H1 (cell line): ENCODE measurements at regions of chr9 and their contacts with region 1.

Region 1: DNA sequence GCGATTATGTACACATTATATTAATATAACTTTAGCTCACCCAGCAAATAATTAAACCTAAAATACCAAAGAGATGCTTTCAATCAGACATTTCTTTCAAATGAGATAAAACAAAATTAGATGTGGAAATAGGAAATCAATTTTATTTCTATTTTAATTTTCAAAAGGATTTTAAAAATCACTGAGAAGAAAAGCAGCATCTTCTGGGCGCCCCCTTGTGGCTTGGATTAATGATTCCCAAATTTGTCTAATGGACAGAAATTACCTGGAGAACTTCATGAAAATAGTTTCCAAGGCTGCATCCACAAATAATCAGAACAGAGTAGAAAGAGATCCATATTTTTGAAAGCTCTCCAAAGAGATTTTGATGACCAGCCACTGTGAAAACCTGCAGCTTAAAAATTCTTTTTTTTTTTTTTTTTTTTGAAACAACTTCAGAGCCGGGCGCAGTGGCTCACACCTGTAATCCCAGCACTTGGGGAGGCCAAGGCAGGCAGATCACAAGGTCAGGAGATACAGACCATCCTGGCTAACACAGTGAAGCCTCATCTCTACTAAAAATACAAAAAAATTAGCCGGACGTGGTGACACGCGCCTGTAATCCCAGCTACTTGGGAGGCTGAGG is 50.9 kb upstream of the CEMIP2 start:
- DNase-seq: no peak
- H3K4me3 ChIP-seq: no peak overlapping the region
- H3K27ac ChIP-seq: no peak overlapping the region
- H3K4me1 ChIP-seq: peaks cover 0 to 8% (median 1%) of the 10 kb centered on the region in 4 experiments; a peak in 3 of 7 replicates
- H3K27me3 ChIP-seq: no peaks in the 10 kb centered on the region
- CTCF ChIP-seq: peak in 2 of 3 experiments; percentile 27 to 46; a peak in 2 of 4 replicates
- EP300 ChIP-seq: no peak
- POLR2A ChIP-seq: no peak
- RAD21 ChIP-seq: peak; percentile 50 to 53

Region 2: GRCh38 chr9:70911791-70912190 is 907.4 kb before region 1 on chr9:
- CTCF ChIA-PET with region 1: no interaction called
- POLR2A ChIA-PET with region 1: no interaction called
- DNase-seq: no peak
- H3K4me3 ChIP-seq: no peak overlapping the region
- H3K27ac ChIP-seq: no peak overlapping the region
- H3K4me1 ChIP-seq: no peaks in the 10 kb centered on the region
- H3K27me3 ChIP-seq: no peaks in the 10 kb centered on the region
- CTCF ChIP-seq: no peak
- EP300 ChIP-seq: no peak
- POLR2A ChIP-seq: no peak
- RAD21 ChIP-seq: no peak

Region 3: DNA sequence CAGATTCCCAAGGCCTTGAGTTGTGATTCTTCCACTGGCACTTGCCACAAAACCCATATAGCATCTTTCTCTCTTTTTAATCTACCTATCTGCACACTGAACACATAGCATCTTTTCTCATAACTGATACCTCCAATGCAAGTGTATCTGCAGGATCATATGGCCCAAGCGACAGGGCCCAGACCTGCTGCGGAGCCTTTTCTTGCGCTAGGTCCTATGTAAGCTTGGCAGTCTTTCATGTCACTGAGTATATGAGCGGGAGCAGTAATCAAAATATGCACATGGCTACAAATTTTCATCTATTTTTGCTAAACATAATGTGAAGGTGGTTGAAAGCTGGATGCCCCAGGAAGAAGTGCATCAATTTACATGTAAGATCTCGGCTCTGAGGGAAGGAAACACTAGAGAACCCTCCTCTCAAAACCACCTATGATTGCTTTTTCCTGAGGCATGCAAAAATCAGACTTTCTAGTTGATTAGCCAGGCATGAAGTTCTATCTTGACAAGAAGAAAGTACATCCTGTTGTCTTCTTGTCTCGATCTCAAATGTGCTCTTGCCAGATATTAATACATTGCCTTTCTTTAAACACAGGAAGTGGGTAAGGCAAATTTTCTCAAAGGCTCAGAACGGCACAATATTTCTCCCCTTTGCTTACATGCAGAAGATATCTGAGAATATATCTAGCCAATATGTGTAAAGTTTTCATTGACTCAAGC is 24.0 kb before region 1 on chr9:
- CTCF ChIA-PET with region 1: interaction called, 18 read pairs
- POLR2A ChIA-PET with region 1: no interaction called
- DNase-seq: no peak
- H3K4me3 ChIP-seq: no peak overlapping the region
- H3K27ac ChIP-seq: no peak overlapping the region
- H3K4me1 ChIP-seq: no peaks in the 10 kb centered on the region
- H3K27me3 ChIP-seq: no peaks in the 10 kb centered on the region
- CTCF ChIP-seq: no peak
- EP300 ChIP-seq: no peak
- POLR2A ChIP-seq: no peak
- RAD21 ChIP-seq: no peak

Region 4: DNA sequence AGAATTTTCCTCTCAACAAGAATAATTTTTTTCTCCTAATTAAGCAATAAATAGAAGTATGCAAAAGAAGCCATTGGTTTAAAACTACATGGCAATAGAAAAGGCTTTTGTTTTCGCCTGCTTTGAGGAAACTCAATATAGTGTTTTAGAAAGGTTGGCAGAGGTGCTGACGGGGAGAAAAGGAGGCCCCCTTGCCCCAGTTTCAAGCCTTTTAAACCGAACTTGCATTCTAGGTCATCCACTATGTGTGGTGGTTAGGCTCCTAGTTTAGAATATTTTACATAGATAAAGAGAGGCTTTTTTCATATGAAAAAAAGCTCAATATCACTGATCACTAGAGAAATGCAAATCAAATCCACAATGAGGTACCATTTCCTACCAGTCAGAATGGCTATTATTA is 17.4 kb before region 1 on chr9:
- CTCF ChIA-PET with region 1: interaction called, 48 read pairs
- POLR2A ChIA-PET with region 1: no interaction called
- DNase-seq: no peak
- H3K4me3 ChIP-seq: no peak overlapping the region
- H3K27ac ChIP-seq: no peak overlapping the region
- H3K4me1 ChIP-seq: no peaks in the 10 kb centered on the region
- H3K27me3 ChIP-seq: no peaks in the 10 kb centered on the region
- CTCF ChIP-seq: no peak
- EP300 ChIP-seq: no peak
- POLR2A ChIP-seq: no peak
- RAD21 ChIP-seq: no peak

Region 5: GRCh38 chr9:71806901-71807307 is 12.3 kb before region 1 on chr9:
- CTCF ChIA-PET with region 1: interaction called, 48 read pairs
- POLR2A ChIA-PET with region 1: no interaction called
- DNase-seq: peak; percentile 27 to 55
- H3K4me3 ChIP-seq: no peak overlapping the region
- H3K27ac ChIP-seq: no peak overlapping the region
- H3K4me1 ChIP-seq: no peaks in the 10 kb centered on the region
- H3K27me3 ChIP-seq: no peaks in the 10 kb centered on the region
- CTCF ChIP-seq: peak; percentile 63 to 92 (median 90)
- EP300 ChIP-seq: no peak
- POLR2A ChIP-seq: no peak
- RAD21 ChIP-seq: peak; percentile 97 to 98

Region 6: DNA sequence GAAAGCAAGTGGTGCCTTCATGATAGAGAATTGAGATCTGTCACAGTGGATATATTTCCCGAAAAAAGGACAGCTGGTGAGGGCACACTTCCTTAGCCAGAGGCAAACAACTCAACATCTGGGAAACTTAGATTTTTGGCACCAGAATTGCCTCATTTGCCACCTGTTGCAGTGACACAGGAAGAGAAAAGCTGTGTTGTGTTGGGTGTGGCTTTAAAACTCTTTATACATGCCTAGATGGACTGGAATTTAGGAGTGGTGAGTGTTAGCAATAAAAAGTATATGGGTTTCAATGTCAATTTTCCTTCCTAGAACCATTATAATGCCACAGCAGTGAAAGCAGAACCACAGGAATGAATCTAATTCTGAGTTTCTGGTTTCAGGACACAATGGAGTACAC is 11.7 kb after region 1 on chr9:
- CTCF ChIA-PET with region 1: interaction called, 21 read pairs
- POLR2A ChIA-PET with region 1: no interaction called
- DNase-seq: no peak
- H3K4me3 ChIP-seq: no peak overlapping the region
- H3K27ac ChIP-seq: no peak overlapping the region
- H3K4me1 ChIP-seq: no peaks in the 10 kb centered on the region
- H3K27me3 ChIP-seq: no peaks in the 10 kb centered on the region
- CTCF ChIP-seq: no peak
- EP300 ChIP-seq: no peak
- POLR2A ChIP-seq: no peak
- RAD21 ChIP-seq: no peak

Region 7: DNA sequence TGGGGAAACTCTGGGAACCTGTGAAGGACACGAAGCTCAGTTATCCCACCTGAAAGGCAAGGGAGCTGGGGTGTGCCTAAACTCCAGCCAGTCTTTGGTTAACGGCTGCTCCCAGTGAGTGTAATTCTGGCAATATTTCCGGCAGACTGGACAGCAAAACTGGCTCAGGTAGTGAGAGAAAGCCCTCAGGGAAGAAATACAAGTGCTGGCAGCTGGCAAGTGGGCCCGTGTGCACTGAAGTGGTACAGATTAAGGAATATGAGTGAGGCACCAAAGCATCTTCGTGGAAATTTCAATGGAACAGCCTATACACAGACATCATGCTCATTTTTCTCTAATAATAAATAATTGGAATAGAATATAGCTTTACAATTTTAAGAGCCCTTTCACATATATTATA is 35.6 kb after region 1 on chr9:
- CTCF ChIA-PET with region 1: interaction called, 12 read pairs
- POLR2A ChIA-PET with region 1: no interaction called
- DNase-seq: no peak
- H3K4me3 ChIP-seq: no peak overlapping the region
- H3K27ac ChIP-seq: no peak overlapping the region
- H3K4me1 ChIP-seq: no peaks in the 10 kb centered on the region; a peak in 1 of 7 replicates
- H3K27me3 ChIP-seq: no peaks in the 10 kb centered on the region
- CTCF ChIP-seq: no peak
- EP300 ChIP-seq: no peak
- POLR2A ChIP-seq: no peak
- RAD21 ChIP-seq: no peak